GM12878 (cell line): ENCODE measurements at regions of chr10 and their contacts with region 1.

Region 1: DNA sequence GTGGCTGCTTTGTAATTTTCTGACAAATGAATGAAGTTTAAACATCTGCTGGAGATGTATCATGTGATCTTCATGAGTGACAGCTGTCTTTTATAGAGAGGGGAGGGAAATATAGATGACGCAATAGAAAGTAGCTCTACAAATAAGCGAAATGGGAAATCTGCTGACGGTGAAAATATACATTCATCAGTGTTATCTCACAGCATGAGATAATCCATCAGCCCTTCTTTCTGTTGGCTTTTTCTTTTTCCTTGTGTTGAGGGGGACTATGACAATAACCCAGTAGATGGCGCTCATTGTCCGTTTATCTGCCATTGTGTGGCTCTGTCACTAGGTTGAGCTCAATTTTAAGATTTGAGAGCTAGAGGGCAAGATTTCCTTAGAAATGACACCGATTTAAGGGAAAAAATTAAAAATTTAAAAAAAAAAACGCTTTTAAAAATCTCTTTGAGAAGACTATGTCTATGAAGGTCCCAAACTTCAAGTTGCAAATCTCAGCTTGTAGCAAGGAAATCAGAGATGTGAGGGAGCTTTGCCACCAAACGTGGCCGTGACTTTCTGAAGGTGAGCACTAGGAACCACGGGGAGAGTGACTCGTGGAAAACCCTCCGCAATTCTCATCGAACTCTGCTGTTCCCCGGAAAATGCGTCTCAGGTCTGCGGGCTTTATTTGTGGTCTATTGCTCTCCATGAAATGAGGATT is 114.6 kb upstream of the SFMBT2 start:
- DNase-seq: peak; percentile 64
- ATAC-seq: peak; percentile 78
- H3K4me3 ChIP-seq: no peak overlapping the region
- H3K27ac ChIP-seq: no peak overlapping the region; the same call in 1 of the 2 replicates
- H3K4me1 ChIP-seq: peaks cover 13% of the 10 kb centered on the region
- H3K27me3 ChIP-seq: peaks cover 0 to 6% of the 10 kb centered on the region in 2 experiments; a peak in 1 of 4 replicates
- CTCF ChIP-seq: peak; percentile 69 to 93 (median 81)
- EP300 ChIP-seq: 0 out of 4 replicates have a peak, but pooled peaks of 1 of the 2 experiments have one; percentile 5
- POLR2A ChIP-seq: no peak
- RAD21 ChIP-seq: peak; percentile 95

Region 2: GRCh38 chr10:6920072-6921019 is 605.1 kb before region 1 on chr10:
- CTCF ChIA-PET with region 1: interaction called, 13 read pairs
- POLR2A ChIA-PET with region 1: no interaction called
- RAD21 ChIA-PET with region 1: interaction called, 3 read pairs
- SMC1A ChIA-PET with region 1: interaction called, 3 read pairs
- in situ Hi-C with region 1: no loop called
- intact Hi-C with region 1: no loop called
- DNase-seq: no peak
- ATAC-seq: peak; percentile 99
- H3K4me3 ChIP-seq: no peak overlapping the region
- H3K27ac ChIP-seq: no peak overlapping the region
- H3K4me1 ChIP-seq: peaks cover under 1% of the 10 kb centered on the region
- H3K27me3 ChIP-seq: no peaks in the 10 kb centered on the region
- CTCF ChIP-seq: peak; percentile 92 to 97 (median 95)
- EP300 ChIP-seq: no peak
- POLR2A ChIP-seq: no peak
- RAD21 ChIP-seq: peak; percentile 99

Region 3: DNA sequence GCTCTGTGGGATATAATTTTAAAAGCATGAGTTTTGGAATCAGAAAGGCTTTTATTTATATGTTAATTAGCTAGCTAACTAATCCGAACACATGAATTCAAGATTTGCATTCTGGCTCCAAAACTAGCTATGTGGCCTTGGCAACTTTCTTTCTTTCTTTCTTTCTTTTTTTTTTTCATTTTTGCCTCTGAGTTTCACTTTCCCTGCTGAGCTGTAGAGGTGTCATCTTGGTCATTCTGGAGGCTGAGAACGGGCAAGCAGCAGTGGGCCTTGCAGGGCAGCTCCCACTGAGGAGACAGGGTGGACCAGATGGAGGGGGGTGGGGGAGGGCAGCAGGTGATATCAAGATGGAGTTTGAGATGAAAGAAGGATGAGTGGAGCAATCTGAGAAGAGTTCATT is 89.8 kb before region 1 on chr10:
- CTCF ChIA-PET with region 1: no interaction called
- POLR2A ChIA-PET with region 1: no interaction called
- RAD21 ChIA-PET with region 1: interaction called, 6 read pairs
- SMC1A ChIA-PET with region 1: interaction called, 5 read pairs
- in situ Hi-C with region 1: no loop called
- intact Hi-C with region 1: loop called (anchors 5 kb)
- DNase-seq: no peak
- ATAC-seq: peak; percentile 88
- H3K4me3 ChIP-seq: no peak overlapping the region
- H3K27ac ChIP-seq: peak overlapping the region; percentile 48; the same call in 1 of the 2 replicates
- H3K4me1 ChIP-seq: peaks cover 20% of the 10 kb centered on the region
- H3K27me3 ChIP-seq: no peaks in the 10 kb centered on the region
- CTCF ChIP-seq: no peak
- EP300 ChIP-seq: 0 out of 4 replicates have a peak, but pooled peaks of 1 of the 2 experiments have one; percentile 20
- POLR2A ChIP-seq: no peak
- RAD21 ChIP-seq: no peak

Region 4: GRCh38 chr10:7491949-7492659 is 33.4 kb before region 1 on chr10:
- CTCF ChIA-PET with region 1: interaction called, 25 read pairs
- POLR2A ChIA-PET with region 1: interaction called, 7 read pairs
- RAD21 ChIA-PET with region 1: interaction called, 24 read pairs
- SMC1A ChIA-PET with region 1: interaction called, 41 read pairs
- in situ Hi-C with region 1: no loop called
- intact Hi-C with region 1: no loop called
- DNase-seq: peak; percentile 74
- ATAC-seq: peak; percentile 91
- H3K4me3 ChIP-seq: peak overlapping the region; percentile 41; the same call in 1 of the 2 replicates
- H3K27ac ChIP-seq: peak overlapping the region; percentile 80
- H3K4me1 ChIP-seq: peaks cover 37% of the 10 kb centered on the region
- H3K27me3 ChIP-seq: no peaks in the 10 kb centered on the region
- CTCF ChIP-seq: no peak
- EP300 ChIP-seq: 0 out of 4 replicates have a peak, but pooled peaks of 1 of the 2 experiments have one; percentile 57
- POLR2A ChIP-seq: no peak
- RAD21 ChIP-seq: no peak

Region 5: DNA sequence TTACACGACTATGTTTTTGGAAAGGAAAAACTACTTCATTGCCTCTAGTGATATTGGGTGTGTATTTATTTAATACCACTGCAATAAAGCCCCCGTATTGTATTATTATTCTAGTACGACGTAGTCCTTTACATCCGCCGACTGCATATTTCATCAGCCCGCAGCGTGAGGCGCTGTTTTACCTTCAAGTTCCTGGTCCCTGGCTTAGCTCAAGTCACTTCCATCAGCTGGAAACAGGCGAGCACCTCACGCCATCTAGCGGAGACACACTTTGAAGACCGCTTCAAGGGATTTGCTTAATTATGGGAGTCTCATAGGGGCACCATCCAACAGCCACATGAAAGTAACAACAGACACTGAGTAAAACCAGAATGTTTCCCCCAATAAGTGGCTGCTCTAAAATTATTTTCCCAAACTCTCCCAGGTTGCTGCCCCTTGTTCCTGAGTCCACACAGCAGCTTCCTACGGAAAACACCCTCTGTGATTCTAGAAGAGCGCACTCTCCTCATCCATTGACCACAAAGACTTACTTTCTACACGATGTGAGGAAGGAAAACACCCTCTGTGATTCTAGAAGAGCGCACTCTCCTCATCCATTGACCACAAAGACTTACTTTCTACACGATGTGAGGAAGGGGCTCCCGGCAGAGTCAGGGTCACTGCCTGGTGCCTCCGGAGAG is 161.9 kb after region 1 on chr10:
- CTCF ChIA-PET with region 1: interaction called, 187 read pairs
- POLR2A ChIA-PET with region 1: no interaction called
- RAD21 ChIA-PET with region 1: interaction called, 109 read pairs
- SMC1A ChIA-PET with region 1: interaction called, 51 read pairs
- in situ Hi-C with region 1: loop called (anchors 5 kb)
- intact Hi-C with region 1: loop called (anchors 1 kb)
- DNase-seq: peak; percentile 62
- ATAC-seq: peak; percentile 92
- H3K4me3 ChIP-seq: no peak overlapping the region
- H3K27ac ChIP-seq: no peak overlapping the region
- H3K4me1 ChIP-seq: no peaks in the 10 kb centered on the region
- H3K27me3 ChIP-seq: no peaks in the 10 kb centered on the region
- CTCF ChIP-seq: peak; percentile 86 to 95 (median 89)
- EP300 ChIP-seq: no peak
- POLR2A ChIP-seq: no peak
- RAD21 ChIP-seq: peak; percentile 89

Region 6: DNA sequence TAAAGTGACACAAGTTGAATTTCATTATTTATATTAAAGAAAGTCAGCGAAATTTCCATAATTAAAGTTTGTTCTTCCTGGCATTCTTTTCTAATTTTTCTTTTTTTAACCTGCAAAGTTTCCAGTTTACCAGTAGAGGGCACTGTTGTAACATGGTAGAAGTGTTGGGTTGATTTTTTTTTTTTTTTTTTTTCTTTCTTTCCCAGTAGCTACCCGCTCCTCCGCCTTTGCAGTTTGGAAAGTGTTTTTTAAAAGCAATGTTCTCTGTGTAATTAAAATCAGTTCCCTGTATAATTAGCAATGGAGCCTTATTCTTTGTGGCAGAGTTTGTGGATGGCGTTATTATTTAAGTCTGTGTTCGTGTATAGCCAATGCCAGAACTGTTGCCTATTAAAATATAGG is 346.6 kb after region 1 on chr10:
- CTCF ChIA-PET with region 1: interaction called, 11 read pairs
- POLR2A ChIA-PET with region 1: no interaction called
- RAD21 ChIA-PET with region 1: interaction called, 3 read pairs
- SMC1A ChIA-PET with region 1: interaction called, 4 read pairs
- in situ Hi-C with region 1: no loop called
- intact Hi-C with region 1: loop called (anchors 5 kb)
- DNase-seq: no peak
- ATAC-seq: no peak
- H3K4me3 ChIP-seq: peak overlapping the region; percentile 47; the same call in 1 of the 2 replicates
- H3K27ac ChIP-seq: no peak overlapping the region
- H3K4me1 ChIP-seq: no peaks in the 10 kb centered on the region
- H3K27me3 ChIP-seq: no peaks in the 10 kb centered on the region
- CTCF ChIP-seq: peak; percentile 58 to 65 (median 62)
- EP300 ChIP-seq: no peak
- POLR2A ChIP-seq: no peak
- RAD21 ChIP-seq: peak; percentile 94